ENCODE measurements at regions of chr1 and their contacts with region 1.

Region 1: GRCh38 chr1:214328770-214329469 is 48.0 kb downstream of the SMYD2 start:
- DNase-seq: peak; percentile 90
- ATAC-seq: peak; percentile 84
- H3K4me3 Mint-ChIP-seq: no peak overlapping the region
- H3K27ac Mint-ChIP-seq: no peak overlapping the region
- H3K4me1 Mint-ChIP-seq: peaks cover 15% of the 10 kb centered on the region
- H3K27me3 Mint-ChIP-seq: no peaks in the 10 kb centered on the region
- CTCF ChIP-seq: peak; percentile 85

Region 2: GRCh38 chr1:213858581-213858980 is 470.3 kb before region 1 on chr1:
- CTCF ChIA-PET with region 1: no interaction called
- POLR2A ChIA-PET with region 1: no interaction called
- DNase-seq: no peak
- ATAC-seq: peak; percentile 56
- H3K4me3 Mint-ChIP-seq: no peak overlapping the region
- H3K27ac Mint-ChIP-seq: no peak overlapping the region
- H3K4me1 Mint-ChIP-seq: 0 out of 2 replicates have a peak, but pooled peaks cover 6% of the 10 kb centered on the region
- H3K27me3 Mint-ChIP-seq: no peaks in the 10 kb centered on the region
- CTCF ChIP-seq: no peak

Region 3: GRCh38 chr1:214187121-214187900 is 141.6 kb before region 1 on chr1:
- CTCF ChIA-PET with region 1: interaction called, 23 read pairs
- POLR2A ChIA-PET with region 1: no interaction called
- DNase-seq: peak; percentile 29
- ATAC-seq: peak; percentile 69
- H3K4me3 Mint-ChIP-seq: peak overlapping the region; percentile 64
- H3K27ac Mint-ChIP-seq: no peak overlapping the region
- H3K4me1 Mint-ChIP-seq: peaks cover 13% of the 10 kb centered on the region
- H3K27me3 Mint-ChIP-seq: peaks cover 49% of the 10 kb centered on the region
- CTCF ChIP-seq: no peak

Region 4: DNA sequence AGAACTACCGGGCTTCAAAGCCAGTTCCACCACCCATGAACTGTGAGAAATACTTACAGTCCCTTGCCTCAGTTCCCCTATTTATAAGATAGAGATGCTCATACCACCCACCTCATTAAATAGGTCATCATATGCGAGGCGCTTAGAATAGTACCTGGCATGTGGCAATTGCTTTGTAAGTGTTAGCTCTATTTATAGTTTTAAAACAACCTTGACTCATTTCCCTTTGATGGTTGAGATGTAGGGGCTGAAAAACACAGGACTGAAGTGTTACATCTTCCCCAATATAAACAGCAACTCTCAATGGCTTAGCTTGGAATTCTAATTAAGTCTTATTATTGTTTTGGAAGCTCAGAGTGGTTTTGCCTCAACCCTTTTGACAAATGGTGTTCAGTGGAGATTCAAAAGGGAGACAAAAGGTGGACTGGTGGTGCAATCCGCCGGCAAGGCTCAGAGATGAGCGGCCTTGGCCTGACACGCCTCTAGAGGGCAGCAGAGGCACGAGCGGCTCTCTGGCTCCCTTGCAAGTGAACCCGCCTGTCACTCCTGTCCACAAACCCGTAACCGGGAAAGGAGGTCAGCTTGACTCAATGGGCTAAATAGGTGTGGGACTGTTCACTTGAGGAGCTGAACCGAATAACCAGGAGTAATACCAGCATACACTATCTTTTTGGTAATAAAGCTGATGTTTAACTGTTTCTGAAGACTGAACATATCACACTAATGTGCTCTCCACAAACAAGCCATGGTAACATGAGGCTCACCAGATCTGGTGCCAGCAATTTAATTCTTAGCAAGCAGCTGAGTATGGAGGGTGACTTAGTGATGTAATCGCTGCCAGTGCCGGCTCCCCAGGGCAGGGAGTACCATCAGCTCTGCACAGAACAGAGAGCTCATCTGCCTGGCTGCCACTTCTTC is 67.5 kb before region 1 on chr1:
- CTCF ChIA-PET with region 1: interaction called, 275 read pairs
- POLR2A ChIA-PET with region 1: interaction called, 5 read pairs
- DNase-seq: peak; percentile 93
- ATAC-seq: peak; percentile 92
- H3K4me3 Mint-ChIP-seq: no peak overlapping the region
- H3K27ac Mint-ChIP-seq: no peak overlapping the region
- H3K4me1 Mint-ChIP-seq: peaks cover 22% of the 10 kb centered on the region
- H3K27me3 Mint-ChIP-seq: no peaks in the 10 kb centered on the region; the same call in 1 of the 2 replicates
- CTCF ChIP-seq: peak; percentile 86

Region 5: DNA sequence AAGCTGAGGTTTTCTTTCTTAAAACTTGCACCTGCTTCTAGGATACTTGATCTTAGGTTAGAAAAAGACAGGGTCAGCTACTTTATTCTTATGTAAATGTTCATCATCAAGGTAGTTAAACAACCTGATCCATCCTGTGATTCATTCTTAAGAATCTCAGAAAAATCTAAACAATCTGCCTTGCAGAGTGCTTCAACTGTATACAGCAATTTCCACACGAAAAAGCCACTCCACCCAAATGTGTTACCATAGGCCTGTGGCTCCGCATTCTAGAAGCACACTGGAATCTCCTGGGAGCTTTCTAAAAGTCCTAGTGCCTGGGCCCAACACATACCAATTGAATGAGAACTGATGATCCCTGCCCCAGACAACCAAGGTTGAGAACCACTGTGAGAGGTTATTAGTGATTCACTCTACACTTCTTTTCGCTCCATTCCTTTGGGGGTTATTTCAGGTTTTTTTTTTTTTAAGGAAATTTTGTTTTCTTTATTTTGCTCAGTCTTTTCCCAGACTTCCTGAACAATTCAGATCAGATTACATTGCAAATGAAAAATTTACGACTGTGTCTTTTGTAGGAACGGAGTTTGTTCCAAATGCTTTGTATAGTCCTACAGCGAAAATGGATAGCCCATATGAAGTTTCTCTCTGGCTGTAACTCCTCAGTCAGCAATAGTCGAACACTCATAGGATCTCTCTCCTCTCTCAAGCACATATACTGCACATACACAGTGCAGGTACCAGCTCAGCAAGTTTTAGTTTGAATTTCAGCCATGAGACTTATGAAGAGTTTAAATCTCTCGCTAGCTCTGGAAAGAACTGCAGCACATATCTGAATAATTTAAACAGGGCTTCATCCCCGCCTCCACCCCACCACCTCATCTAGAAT is 31.8 kb before region 1 on chr1:
- CTCF ChIA-PET with region 1: interaction called, 20 read pairs
- POLR2A ChIA-PET with region 1: interaction called, 3 read pairs
- DNase-seq: no peak
- ATAC-seq: peak; percentile 87
- H3K4me3 Mint-ChIP-seq: peak overlapping the region; percentile 22
- H3K27ac Mint-ChIP-seq: peak overlapping the region; percentile 16; the same call in 1 of the 2 replicates
- H3K4me1 Mint-ChIP-seq: peaks cover 43% of the 10 kb centered on the region
- H3K27me3 Mint-ChIP-seq: peaks cover 58% of the 10 kb centered on the region
- CTCF ChIP-seq: no peak

Region 6: DNA sequence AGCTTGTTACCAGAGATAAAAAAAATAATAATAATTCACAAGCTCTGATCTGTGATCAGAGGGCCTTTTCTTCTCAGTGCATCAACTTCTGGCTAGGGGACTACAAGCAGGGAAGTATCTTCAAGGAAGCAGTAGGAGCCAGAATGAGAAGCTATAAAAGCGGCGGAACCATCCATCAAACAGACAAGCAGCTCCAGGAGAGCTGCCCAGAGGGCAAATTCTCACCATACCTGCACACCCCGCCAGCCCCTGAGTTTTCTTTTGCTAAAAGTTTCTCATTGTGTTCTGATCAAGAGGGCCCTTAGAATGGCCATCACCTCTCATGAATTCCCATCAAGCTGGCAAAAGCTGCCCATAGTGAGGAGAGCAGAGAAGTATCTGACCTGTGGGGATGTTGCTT is 51.5 kb after region 1 on chr1:
- CTCF ChIA-PET with region 1: interaction called, 11 read pairs
- POLR2A ChIA-PET with region 1: no interaction called
- DNase-seq: no peak
- ATAC-seq: peak; percentile 79
- H3K4me3 Mint-ChIP-seq: no peak overlapping the region
- H3K27ac Mint-ChIP-seq: peak overlapping the region; percentile 87
- H3K4me1 Mint-ChIP-seq: peaks cover 28% of the 10 kb centered on the region
- H3K27me3 Mint-ChIP-seq: no peaks in the 10 kb centered on the region
- CTCF ChIP-seq: no peak

Region 7: DNA sequence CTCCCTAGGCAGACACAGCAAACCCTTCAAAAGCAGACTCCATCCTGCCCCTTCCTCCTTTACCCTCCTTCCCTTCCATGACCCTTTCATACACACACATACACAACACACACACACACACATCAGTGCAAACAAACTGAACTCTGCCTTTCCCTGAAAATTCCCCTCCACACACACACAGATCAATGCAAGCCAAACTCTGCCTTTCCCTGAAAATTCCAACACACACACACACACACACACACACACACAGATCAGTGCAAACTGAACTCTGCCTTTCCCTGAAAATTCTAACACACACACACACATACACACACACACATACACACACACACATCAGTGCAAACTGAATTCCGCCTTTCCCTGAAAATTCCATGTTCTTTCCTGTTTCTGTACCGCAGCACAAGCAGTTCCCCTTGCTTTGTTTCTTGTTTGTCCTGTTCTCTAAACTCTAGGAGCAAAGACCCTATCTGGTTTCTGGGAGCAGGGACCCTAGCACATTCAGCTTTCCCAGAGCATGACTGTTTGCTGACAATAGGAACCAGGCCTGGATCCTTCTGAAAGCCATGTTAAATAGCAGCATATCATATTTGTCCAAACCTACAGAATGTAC is 131.5 kb after region 1 on chr1:
- CTCF ChIA-PET with region 1: no interaction called
- POLR2A ChIA-PET with region 1: no interaction called
- DNase-seq: no peak
- ATAC-seq: peak; percentile 31; the same call in 1 of the 2 replicates
- H3K4me3 Mint-ChIP-seq: no peak overlapping the region
- H3K27ac Mint-ChIP-seq: peak overlapping the region; percentile 71
- H3K4me1 Mint-ChIP-seq: peaks cover 40% of the 10 kb centered on the region
- H3K27me3 Mint-ChIP-seq: no peaks in the 10 kb centered on the region
- CTCF ChIP-seq: no peak

Region 8: DNA sequence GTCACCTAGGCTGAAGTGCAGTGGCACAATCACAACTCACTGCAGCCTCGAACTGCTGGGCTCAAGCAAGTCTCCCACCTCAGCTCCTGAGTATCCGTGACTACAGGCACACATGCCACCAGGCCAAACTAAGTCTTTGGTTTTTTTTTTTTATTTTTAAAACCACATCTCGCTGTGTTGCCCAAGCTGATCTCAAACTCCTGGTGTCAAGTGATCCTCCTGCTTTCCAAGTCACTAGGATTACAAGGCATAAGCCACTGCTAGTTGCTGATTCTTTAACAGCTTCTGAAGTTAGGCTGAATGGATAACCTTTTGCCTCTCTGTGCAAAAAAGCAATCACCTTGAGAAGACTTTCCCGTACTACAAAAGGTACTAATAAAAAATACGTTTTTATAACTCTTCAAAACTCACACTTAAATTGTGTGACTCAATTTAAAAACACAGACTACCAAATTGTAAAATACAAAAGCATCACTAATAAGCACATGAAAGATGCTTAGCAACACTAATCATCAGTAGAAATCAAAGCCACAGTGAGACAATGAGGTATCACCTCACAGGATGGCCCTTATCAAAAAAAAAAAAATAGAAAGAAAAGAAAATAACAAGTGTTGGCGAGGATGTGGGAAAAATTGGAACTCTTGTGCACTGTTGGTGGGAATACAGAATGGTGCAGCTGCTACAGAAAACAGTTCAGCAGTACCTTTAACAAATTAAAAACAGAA is 182.2 kb after region 1 on chr1:
- CTCF ChIA-PET with region 1: no interaction called
- POLR2A ChIA-PET with region 1: no interaction called
- DNase-seq: no peak
- ATAC-seq: no peak
- H3K4me3 Mint-ChIP-seq: no peak overlapping the region
- H3K27ac Mint-ChIP-seq: no peak overlapping the region
- H3K4me1 Mint-ChIP-seq: peaks cover 54% of the 10 kb centered on the region
- H3K27me3 Mint-ChIP-seq: peaks cover 10% of the 10 kb centered on the region
- CTCF ChIP-seq: no peak

Region 9: GRCh38 chr1:214590696-214591095 is 261.8 kb after region 1 on chr1:
- CTCF ChIA-PET with region 1: interaction called, 122 read pairs
- POLR2A ChIA-PET with region 1: interaction called, 3 read pairs
- DNase-seq: no peak
- ATAC-seq: 0 out of 2 replicates have a peak, but pooled peaks have one; percentile 26
- H3K4me3 Mint-ChIP-seq: no peak overlapping the region
- H3K27ac Mint-ChIP-seq: no peak overlapping the region
- H3K4me1 Mint-ChIP-seq: no peaks in the 10 kb centered on the region
- H3K27me3 Mint-ChIP-seq: no peaks in the 10 kb centered on the region
- CTCF ChIP-seq: no peak